PC-3 (cell line): ENCODE measurements at regions of chr11 and their contacts with region 1.

Region 1: DNA sequence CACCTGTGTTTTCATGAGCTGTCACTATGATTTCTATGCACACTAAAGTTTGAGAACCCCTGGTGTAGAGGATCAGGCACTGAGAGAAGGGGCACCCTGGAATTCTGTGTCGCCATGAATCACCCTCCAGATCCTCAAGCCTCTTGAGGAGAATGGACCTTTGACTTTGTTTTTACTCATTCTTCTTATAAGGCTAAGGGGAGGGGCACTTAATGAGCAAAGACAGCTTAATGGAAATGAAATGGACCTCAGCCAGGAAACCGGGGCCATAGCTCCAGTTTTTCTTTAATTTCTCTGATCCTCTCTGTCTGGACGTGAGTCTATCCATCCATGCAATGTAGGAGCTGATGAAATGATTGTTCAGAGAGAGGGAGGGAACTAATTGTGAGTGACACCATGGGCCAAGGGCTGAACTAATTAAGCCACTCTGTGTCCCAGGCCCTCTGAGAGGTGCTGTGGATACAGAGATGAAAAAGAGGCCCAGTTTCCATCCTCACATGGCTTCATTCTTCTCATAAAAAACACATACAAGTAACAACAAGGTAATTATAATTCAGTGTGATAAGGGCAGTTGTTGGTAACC is 32.9 kb downstream of the OR2AT4 start:
- DNase-seq: peak; percentile 41
- ATAC-seq: no peak
- H3K4me3 ChIP-seq: no peak overlapping the region
- H3K27ac ChIP-seq: no peak overlapping the region
- H3K4me1 ChIP-seq: peaks cover 14% of the 10 kb centered on the region
- H3K27me3 ChIP-seq: no peaks in the 10 kb centered on the region
- CTCF ChIP-seq: no peak

Region 2: GRCh38 chr11:75429902-75430719 is 366.3 kb after region 1 on chr11:
- CTCF ChIA-PET with region 1: interaction called, 10 read pairs
- POLR2A ChIA-PET with region 1: no interaction called
- intact Hi-C with region 1: no loop called
- DNase-seq: peak; percentile 79
- ATAC-seq: peak; percentile 38
- H3K4me3 ChIP-seq: peak overlapping the region; percentile 66
- H3K27ac ChIP-seq: no peak overlapping the region
- H3K4me1 ChIP-seq: peaks cover 28% of the 10 kb centered on the region
- H3K27me3 ChIP-seq: no peaks in the 10 kb centered on the region
- CTCF ChIP-seq: no peak